Mammary epithelial cell (primary cell): ENCODE measurements at regions of chr5 and their contacts with region 1.

Region 1: GRCh38 chr5:136080483-136081216 is 51.9 kb downstream of the TGFBI start:
- DNase-seq: peak; percentile 95
- H3K4me3 ChIP-seq: peak overlapping the region; percentile 38 to 53 (median 48)
- H3K27ac ChIP-seq: peak overlapping the region; percentile 55
- H3K4me1 ChIP-seq: peaks cover 11% of the 10 kb centered on the region
- H3K27me3 ChIP-seq: no peaks in the 10 kb centered on the region
- CTCF ChIP-seq: no peak

Region 2: DNA sequence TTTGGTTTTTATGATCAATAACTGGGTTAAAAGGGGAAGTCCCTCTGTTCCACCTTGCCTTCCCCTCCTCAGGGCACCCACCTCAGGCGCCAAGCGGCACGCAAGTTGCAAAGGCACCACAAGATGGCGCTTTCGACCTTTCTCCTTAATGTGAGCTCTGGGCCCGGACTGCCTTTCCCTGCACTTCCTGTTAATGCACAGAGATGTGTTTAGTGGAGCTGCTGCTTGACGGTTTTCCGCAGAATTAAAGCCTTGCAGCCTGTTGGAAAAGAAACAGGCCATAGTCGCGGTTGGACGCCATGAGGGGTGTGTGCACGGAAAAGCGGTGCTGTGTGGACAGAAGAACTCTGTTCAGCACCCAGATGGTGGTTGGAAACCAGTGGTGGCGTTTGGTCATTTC is 519.8 kb before region 1 on chr5:
- CTCF ChIA-PET with region 1: no interaction called
- dilution Hi-C with region 1: no loop called
- in situ Hi-C with region 1: loop called in 1 of 2 experiments (anchors 25 kb)
- intact Hi-C with region 1: no loop called
- DNase-seq: peak; percentile 55
- H3K4me3 ChIP-seq: no peak overlapping the region
- H3K27ac ChIP-seq: no peak overlapping the region
- H3K4me1 ChIP-seq: no peaks in the 10 kb centered on the region
- H3K27me3 ChIP-seq: peaks cover under 1% of the 10 kb centered on the region
- CTCF ChIP-seq: peak; percentile 84 to 92

Region 3: GRCh38 chr5:135944967-135945560 is 135.6 kb before region 1 on chr5:
- CTCF ChIA-PET with region 1: interaction called, 4 read pairs
- dilution Hi-C with region 1: no loop called
- in situ Hi-C with region 1: no loop called
- intact Hi-C with region 1: loop called (anchors 1 kb)
- DNase-seq: peak; percentile 63
- H3K4me3 ChIP-seq: no peak overlapping the region
- H3K27ac ChIP-seq: no peak overlapping the region
- H3K4me1 ChIP-seq: no peaks in the 10 kb centered on the region
- H3K27me3 ChIP-seq: no peaks in the 10 kb centered on the region
- CTCF ChIP-seq: peak; percentile 51 to 75

Region 4: DNA sequence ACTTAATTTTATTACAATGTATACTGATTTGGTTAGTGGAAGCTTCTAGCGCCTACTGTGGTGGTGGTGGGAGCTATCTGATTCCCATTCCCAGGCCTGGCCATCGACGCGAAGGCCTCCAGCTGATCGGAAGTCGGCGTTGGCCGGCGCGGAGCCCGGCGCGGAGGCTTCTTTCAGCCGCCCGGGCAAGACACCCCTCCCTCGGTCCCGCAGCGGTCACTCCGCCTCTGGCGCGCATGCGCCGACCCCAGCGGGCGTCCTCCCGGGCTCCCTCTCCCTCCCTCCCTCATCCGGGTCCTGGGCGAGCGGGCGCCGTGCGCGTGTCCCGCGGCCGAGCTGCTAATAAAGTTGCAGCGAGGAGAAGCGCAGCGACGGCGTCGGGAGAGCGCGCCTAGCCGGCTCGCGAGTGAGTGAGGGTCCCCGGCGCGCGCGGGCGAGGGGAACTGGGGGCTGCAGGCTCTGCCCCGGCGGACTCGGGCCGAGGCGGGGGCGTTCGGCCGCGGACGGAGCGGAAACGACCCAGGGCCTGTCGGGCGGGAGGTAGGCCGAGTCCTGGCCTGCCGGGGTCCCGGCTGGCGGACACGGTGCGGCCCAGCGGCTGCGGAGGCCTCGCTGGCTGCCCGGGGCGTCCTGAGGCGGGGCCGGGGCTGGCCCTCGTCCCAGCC is 52.0 kb after region 1 on chr5 and contains the start of gene SMAD5:
- CTCF ChIA-PET with region 1: no interaction called
- dilution Hi-C with region 1: no loop called
- in situ Hi-C with region 1: no loop called
- intact Hi-C with region 1: loop called (anchors 2 kb)
- DNase-seq: peak; percentile 93
- H3K4me3 ChIP-seq: peak within 1 kb of the TSS; percentile 83 to 90 (median 84)
- H3K27ac ChIP-seq: peak within 1 kb of the TSS; percentile 85
- H3K4me1 ChIP-seq: peaks cover 23% of the 10 kb centered on the region
- H3K27me3 ChIP-seq: no peaks in the 10 kb centered on the region
- CTCF ChIP-seq: no peak
- total RNA-seq, gene SMAD5: 66.8 to 84.2 TPM